Left cardiac atrium (tissue), 4 donors: ENCODE measurements at regions of chr7 and their contacts with region 1.

Region 1: GRCh38 chr7:7696458-7697119 is 21.8 kb downstream of the RPA3 start:
- DNase-seq: no peak
- ATAC-seq: peak in 1 of 2 donors; percentile 19

Region 2: GRCh38 chr7:7554021-7554432 is 142.6 kb before region 1 on chr7:
- intact Hi-C with region 1: no loop called
- DNase-seq: no peak
- ATAC-seq: no peak

Region 3: GRCh38 chr7:7739204-7740036 is 42.8 kb after region 1 on chr7:
- intact Hi-C with region 1: loop called in 1 of 2 experiments (anchors 5 kb)
- DNase-seq: no peak
- ATAC-seq: no peak

Region 4: GRCh38 chr7:7761340-7761980 is 64.9 kb after region 1 on chr7:
- intact Hi-C with region 1: loop called in 1 of 2 experiments (anchors 5 kb)
- DNase-seq: no peak
- ATAC-seq: peak in 1 of 2 donors; percentile 74